KBM-7 (cell line): ENCODE measurements at regions of chr9 and their contacts with region 1.

Region 1: DNA sequence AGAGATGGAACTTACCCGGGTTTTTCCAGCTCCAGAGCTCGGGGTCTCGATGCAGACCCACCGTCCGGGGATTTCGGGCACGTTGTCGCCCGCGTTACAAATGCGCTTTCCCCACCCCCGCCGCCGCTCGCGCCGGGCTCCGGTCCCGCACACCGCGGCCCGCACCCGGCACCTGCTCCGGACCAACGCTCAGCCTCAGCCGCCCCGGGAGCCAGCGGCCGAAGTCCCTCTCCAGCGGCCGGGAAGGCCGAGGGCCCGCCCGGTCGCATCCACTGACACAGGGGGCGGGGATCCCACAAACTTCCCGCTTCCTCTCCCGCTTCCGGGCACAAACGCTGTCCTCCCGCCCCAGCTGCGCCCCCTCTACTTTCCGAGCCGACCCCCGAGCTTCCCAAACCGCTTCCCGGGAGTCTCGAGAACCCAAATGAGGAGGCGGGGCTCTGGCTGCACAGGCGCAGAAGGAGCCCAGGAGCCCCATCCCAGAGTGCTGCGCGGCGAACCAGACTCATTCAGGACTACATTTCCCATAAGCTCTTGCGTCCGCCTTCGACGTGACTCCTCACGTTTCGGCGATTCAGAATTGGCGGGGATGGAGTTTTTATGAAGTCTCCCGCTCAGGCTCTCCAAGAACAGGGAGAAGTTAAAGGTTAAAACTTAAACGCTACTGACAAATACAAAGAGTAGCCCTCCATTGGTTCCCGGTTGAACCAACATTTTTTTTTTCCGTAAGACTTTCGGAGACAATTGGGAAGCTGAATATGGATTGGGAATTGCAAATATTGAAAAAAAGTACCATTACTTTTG is at the start of gene ZNF782:
- DNase-seq: peak; percentile 92

Region 2: GRCh38 chr9:97109194-97109811 is 255.0 kb after region 1 on chr9:
- in situ Hi-C with region 1: loop called (anchors 25 kb)
- DNase-seq: peak; percentile 70

Region 3: GRCh38 chr9:97136421-97136820 is 282.1 kb after region 1 on chr9:
- in situ Hi-C with region 1: no loop called
- DNase-seq: peak; percentile 29

Region 4: GRCh38 chr9:97386733-97387503 is 532.6 kb after region 1 on chr9:
- in situ Hi-C with region 1: loop called (anchors 25 kb)
- DNase-seq: peak; percentile 75

Region 5: DNA sequence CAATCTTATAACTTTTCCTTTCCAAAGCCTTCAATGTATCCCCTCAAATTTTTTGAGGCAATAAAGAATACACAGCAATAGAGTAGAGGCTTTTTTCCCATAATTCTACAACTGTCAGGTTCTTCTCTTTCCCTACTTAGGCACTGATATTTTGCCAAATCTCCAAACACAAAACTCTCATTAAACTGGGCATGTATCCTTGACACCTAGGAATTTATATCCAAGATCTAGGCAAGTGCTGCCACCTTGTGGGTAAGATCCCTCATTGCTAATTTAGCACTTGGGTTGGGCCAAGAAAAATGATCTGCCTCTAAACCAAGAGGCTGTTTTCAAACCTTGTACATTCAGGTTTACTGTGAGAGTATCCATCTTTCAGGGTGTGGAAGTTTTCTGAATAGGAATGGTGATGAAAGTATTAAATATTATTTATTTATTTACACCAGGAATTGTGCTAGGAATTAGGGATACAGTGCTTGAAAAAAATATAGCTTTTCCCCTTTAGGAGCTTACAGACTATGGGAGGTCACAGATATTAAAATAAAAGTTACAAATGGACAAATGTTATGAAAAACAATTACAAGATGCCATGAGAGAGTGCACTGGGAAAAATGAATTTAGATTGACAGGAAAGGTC is 761.3 kb after region 1 on chr9:
- in situ Hi-C with region 1: loop called (anchors 25 kb)
- DNase-seq: peak; percentile 73